ENCODE measurements at regions of chr22 and their contacts with region 1.

Region 1: DNA sequence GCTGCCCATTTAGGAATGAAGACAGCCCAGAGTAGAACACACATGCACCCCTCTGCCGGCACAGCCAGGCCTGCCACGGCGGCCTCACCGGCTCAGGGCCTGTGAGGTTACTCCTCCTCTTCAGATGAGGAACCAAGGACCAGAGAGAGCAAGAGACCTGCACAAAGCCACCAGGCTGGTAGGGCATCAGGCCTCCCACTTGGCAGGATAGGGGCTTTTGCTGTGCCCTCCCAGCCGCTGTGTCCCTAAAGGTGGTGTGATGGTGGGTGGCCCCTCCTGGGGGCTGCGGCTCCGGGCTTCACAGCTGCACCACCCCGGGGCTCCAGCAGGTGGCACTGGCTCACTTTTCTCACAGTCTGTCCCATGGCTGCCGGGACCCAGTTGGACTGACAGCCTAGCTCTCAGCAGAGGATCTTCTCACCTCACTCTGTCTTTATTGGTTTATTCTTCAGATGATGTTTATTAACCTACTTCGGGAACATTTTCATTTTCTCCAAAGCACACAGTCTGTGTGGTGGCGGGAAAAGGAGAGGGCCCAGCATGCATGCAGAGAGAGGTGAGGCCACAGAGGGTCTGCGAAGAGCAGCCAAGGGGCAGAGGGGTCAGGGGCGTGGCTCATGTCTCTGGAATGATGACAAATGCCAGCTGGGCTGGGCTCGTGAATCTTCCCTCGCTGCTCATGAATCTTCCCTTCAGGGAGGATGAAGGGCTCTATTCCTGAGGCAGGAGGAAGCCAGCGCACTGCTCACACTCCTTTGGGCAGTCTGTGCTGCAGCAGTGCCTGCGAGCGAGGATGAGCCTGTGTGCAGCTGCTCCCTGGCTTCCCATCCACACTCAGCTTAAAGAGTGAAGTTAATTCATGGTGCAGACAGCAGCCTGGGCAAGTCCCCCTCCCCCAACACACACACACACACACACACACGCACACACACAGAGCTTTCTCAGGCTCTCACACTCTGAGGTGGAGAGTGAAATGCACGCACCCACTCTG is 101.1 kb upstream of the PITPNB start:
- DNase-seq: peak; percentile 62
- H3K4me3 Mint-ChIP-seq: no peak overlapping the region
- H3K27ac Mint-ChIP-seq: no peak overlapping the region
- H3K4me1 Mint-ChIP-seq: peaks cover 10% of the 10 kb centered on the region
- H3K27me3 Mint-ChIP-seq: peaks cover 13% of the 10 kb centered on the region
- CTCF ChIP-seq: peak; percentile 86

Region 2: GRCh38 chr22:27885977-27886842 is 134.0 kb before region 1 on chr22:
- CTCF ChIA-PET with region 1: interaction called, 25 read pairs
- POLR2A ChIA-PET with region 1: no interaction called
- intact Hi-C with region 1: no loop called
- DNase-seq: peak; percentile 46
- H3K4me3 Mint-ChIP-seq: no peak overlapping the region
- H3K27ac Mint-ChIP-seq: peak overlapping the region; percentile 39
- H3K4me1 Mint-ChIP-seq: peaks cover 31% of the 10 kb centered on the region
- H3K27me3 Mint-ChIP-seq: no peaks in the 10 kb centered on the region
- CTCF ChIP-seq: peak; percentile 86

Region 3: GRCh38 chr22:27903805-27904473 is 116.2 kb before region 1 on chr22:
- CTCF ChIA-PET with region 1: no interaction called
- POLR2A ChIA-PET with region 1: no interaction called
- intact Hi-C with region 1: no loop called
- DNase-seq: no peak
- H3K4me3 Mint-ChIP-seq: no peak overlapping the region
- H3K27ac Mint-ChIP-seq: no peak overlapping the region
- H3K4me1 Mint-ChIP-seq: peaks cover 6% of the 10 kb centered on the region
- H3K27me3 Mint-ChIP-seq: no peaks in the 10 kb centered on the region
- CTCF ChIP-seq: no peak

Region 4: GRCh38 chr22:28009272-28009827 is 10.8 kb before region 1 on chr22:
- CTCF ChIA-PET with region 1: interaction called, 18 read pairs
- POLR2A ChIA-PET with region 1: no interaction called
- intact Hi-C with region 1: no loop called
- DNase-seq: peak; percentile 73
- H3K4me3 Mint-ChIP-seq: no peak overlapping the region
- H3K27ac Mint-ChIP-seq: no peak overlapping the region
- H3K4me1 Mint-ChIP-seq: no peaks in the 10 kb centered on the region
- H3K27me3 Mint-ChIP-seq: no peaks in the 10 kb centered on the region
- CTCF ChIP-seq: peak; percentile 97

Region 5: GRCh38 chr22:28043266-28043665 is 23.1 kb after region 1 on chr22:
- CTCF ChIA-PET with region 1: interaction called, 14 read pairs
- POLR2A ChIA-PET with region 1: no interaction called
- intact Hi-C with region 1: no loop called
- DNase-seq: no peak
- H3K4me3 Mint-ChIP-seq: no peak overlapping the region
- H3K27ac Mint-ChIP-seq: no peak overlapping the region
- H3K4me1 Mint-ChIP-seq: no peaks in the 10 kb centered on the region
- H3K27me3 Mint-ChIP-seq: peaks cover 46% of the 10 kb centered on the region
- CTCF ChIP-seq: no peak

Region 6: GRCh38 chr22:28594797-28595462 is 574.8 kb after region 1 on chr22:
- CTCF ChIA-PET with region 1: interaction called, 69 read pairs
- POLR2A ChIA-PET with region 1: no interaction called
- intact Hi-C with region 1: loop called (anchors 1 kb)
- DNase-seq: peak; percentile 68
- H3K4me3 Mint-ChIP-seq: no peak overlapping the region
- H3K27ac Mint-ChIP-seq: no peak overlapping the region
- H3K4me1 Mint-ChIP-seq: no peaks in the 10 kb centered on the region
- H3K27me3 Mint-ChIP-seq: peaks cover 48% of the 10 kb centered on the region
- CTCF ChIP-seq: peak; percentile 61

Region 7: DNA sequence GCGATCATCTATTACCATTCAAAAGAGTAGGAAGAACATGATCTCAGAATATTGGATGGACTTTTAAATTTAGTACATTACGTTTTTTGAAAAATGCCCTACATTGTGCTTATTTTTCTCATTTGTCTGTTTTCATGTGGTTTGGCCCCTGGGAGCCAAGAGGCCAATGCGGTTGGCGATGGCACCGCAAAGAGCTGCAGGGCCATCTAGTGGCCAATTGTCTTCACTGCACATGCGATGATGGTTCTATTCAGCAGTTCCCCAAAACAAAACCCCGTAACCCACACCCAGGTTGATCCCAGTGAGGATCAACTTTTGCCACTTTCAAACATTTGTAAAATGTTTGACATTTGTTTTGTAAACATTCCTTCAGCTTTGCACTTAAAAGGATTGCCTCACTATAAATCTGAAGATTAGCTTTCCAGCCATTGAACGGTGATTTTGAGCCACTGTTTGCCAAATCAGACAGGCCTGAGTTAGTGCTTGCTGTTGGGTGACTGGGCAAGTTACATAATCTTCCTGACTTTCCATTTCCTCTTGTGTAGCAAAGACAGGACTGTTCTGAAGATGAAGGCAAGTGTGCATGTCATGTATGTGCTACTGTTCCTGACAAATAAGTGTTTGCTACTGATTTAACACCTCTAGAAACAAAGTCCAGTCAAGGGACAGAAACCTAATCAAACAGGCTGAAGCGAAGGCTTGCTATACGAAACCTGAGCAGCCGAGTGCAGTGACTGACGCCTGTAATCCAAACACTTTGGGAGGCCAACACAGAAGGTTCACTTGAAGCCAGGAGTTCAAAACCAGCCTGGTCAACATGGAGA is 809.4 kb after region 1 on chr22:
- CTCF ChIA-PET with region 1: interaction called, 12 read pairs
- POLR2A ChIA-PET with region 1: no interaction called
- intact Hi-C with region 1: no loop called
- DNase-seq: peak; percentile 69
- H3K4me3 Mint-ChIP-seq: no peak overlapping the region
- H3K27ac Mint-ChIP-seq: no peak overlapping the region
- H3K4me1 Mint-ChIP-seq: no peaks in the 10 kb centered on the region
- H3K27me3 Mint-ChIP-seq: no peaks in the 10 kb centered on the region
- CTCF ChIP-seq: peak; percentile 94

Measured in MCF 10A (cell line).